H1 (cell line): ENCODE measurements at regions of chr22 and their contacts with region 1.

Region 1: GRCh38 chr22:38284042-38284402 is 11.2 kb upstream of the TMEM184B start:
- DNase-seq: no peak
- H3K4me3 ChIP-seq: no peak overlapping the region
- H3K27ac ChIP-seq: no peak overlapping the region
- H3K4me1 ChIP-seq: peaks cover 0 to 3% (median 1%) of the 10 kb centered on the region in 4 experiments; a peak in 3 of 7 replicates
- H3K27me3 ChIP-seq: no peaks in the 10 kb centered on the region
- CTCF ChIP-seq: no peak
- EP300 ChIP-seq: no peak
- POLR2A ChIP-seq: no peak
- RAD21 ChIP-seq: no peak

Region 2: GRCh38 chr22:38249803-38250642 is 34.0 kb before region 1 on chr22:
- CTCF ChIA-PET with region 1: no interaction called
- POLR2A ChIA-PET with region 1: no interaction called
- DNase-seq: no peak
- H3K4me3 ChIP-seq: no peak overlapping the region
- H3K27ac ChIP-seq: no peak overlapping the region
- H3K4me1 ChIP-seq: no peaks in the 10 kb centered on the region; a peak in 1 of 7 replicates
- H3K27me3 ChIP-seq: no peaks in the 10 kb centered on the region
- CTCF ChIP-seq: no peak
- EP300 ChIP-seq: no peak
- POLR2A ChIP-seq: no peak
- RAD21 ChIP-seq: no peak

Region 3: GRCh38 chr22:38262051-38262795 is 21.8 kb before region 1 on chr22:
- CTCF ChIA-PET with region 1: interaction called, 8 read pairs
- POLR2A ChIA-PET with region 1: interaction called, 11 read pairs
- DNase-seq: peak in 1 of 2 experiments; percentile 84
- H3K4me3 ChIP-seq: no peak overlapping the region
- H3K27ac ChIP-seq: no peak overlapping the region
- H3K4me1 ChIP-seq: peaks cover 4 to 24% (median 10%) of the 10 kb centered on the region in 4 experiments
- H3K27me3 ChIP-seq: no peaks in the 10 kb centered on the region; a peak in 1 of 7 replicates
- CTCF ChIP-seq: peak; percentile 73 to 85 (median 80)
- EP300 ChIP-seq: no peak
- POLR2A ChIP-seq: no peak
- RAD21 ChIP-seq: peak; percentile 74